ENCODE measurements at regions of chr2 and their contacts with region 1.

Region 1: GRCh38 chr2:133780099-133780839 is 212.0 kb upstream of the NCKAP5 start:
- DNase-seq: peak; percentile 94
- ATAC-seq: peak; percentile 20; the same call in 1 of the 2 replicates
- H3K4me3 ChIP-seq: no peak overlapping the region
- H3K27ac ChIP-seq: no peak overlapping the region
- H3K4me1 ChIP-seq: peaks cover 23% of the 10 kb centered on the region
- H3K27me3 ChIP-seq: no peaks in the 10 kb centered on the region
- CTCF ChIP-seq: peak; percentile 95

Region 2: GRCh38 chr2:133324147-133324561 is 456.1 kb before region 1 on chr2:
- CTCF ChIA-PET with region 1: no interaction called
- POLR2A ChIA-PET with region 1: no interaction called
- intact Hi-C with region 1: loop called (anchors 10 kb)
- DNase-seq: peak; percentile 86
- ATAC-seq: peak; percentile 94
- H3K4me3 ChIP-seq: no peak overlapping the region
- H3K27ac ChIP-seq: peak overlapping the region; percentile 95
- H3K4me1 ChIP-seq: peaks cover 48% of the 10 kb centered on the region
- H3K27me3 ChIP-seq: no peaks in the 10 kb centered on the region
- CTCF ChIP-seq: no peak

Region 3: GRCh38 chr2:133434962-133435668 is 345.2 kb before region 1 on chr2:
- CTCF ChIA-PET with region 1: no interaction called
- POLR2A ChIA-PET with region 1: no interaction called
- intact Hi-C with region 1: loop called (anchors 10 kb)
- DNase-seq: peak; percentile 65
- ATAC-seq: no peak
- H3K4me3 ChIP-seq: no peak overlapping the region
- H3K27ac ChIP-seq: no peak overlapping the region
- H3K4me1 ChIP-seq: peaks cover 16% of the 10 kb centered on the region
- H3K27me3 ChIP-seq: no peaks in the 10 kb centered on the region
- CTCF ChIP-seq: peak; percentile 24; the same call in 1 of the 2 replicates

Region 4: GRCh38 chr2:133568172-133568571 is 212.1 kb before region 1 on chr2 and contains the start of gene NCKAP5:
- CTCF ChIA-PET with region 1: interaction called, 14 read pairs
- POLR2A ChIA-PET with region 1: interaction called, 4 read pairs
- intact Hi-C with region 1: loop called (anchors 1 kb)
- DNase-seq: peak; percentile 59
- ATAC-seq: peak; percentile 59
- H3K4me3 ChIP-seq: peak within 1 kb of the TSS; percentile 69
- H3K27ac ChIP-seq: peak within 1 kb of the TSS; percentile 27
- H3K4me1 ChIP-seq: peaks cover 35% of the 10 kb centered on the region
- H3K27me3 ChIP-seq: no peaks in the 10 kb centered on the region
- CTCF ChIP-seq: no peak; the same call in 1 of the 2 replicates
- total RNA-seq, gene NCKAP5: 3.2 and 4.8 TPM in 2 replicates

Region 5: DNA sequence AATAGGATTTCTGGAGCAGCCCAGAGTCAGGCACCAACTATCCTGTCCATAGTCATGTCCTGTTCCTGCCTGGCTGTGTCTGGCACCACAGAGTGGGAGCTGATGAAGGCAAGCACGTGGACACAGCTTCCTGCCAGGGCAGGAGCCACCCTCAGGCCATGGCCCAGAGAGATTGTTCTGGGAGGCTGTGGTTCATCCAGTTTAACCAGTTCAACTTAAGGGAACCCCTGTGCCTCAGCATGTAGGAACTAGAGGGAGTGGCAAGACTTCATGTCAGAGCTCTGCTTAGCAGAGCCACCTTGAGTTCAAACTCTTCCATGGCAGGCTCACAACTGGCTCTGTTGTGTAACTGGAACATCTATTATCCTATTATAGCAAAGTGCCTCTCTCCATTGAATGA is 138.8 kb before region 1 on chr2:
- CTCF ChIA-PET with region 1: no interaction called
- POLR2A ChIA-PET with region 1: no interaction called
- intact Hi-C with region 1: loop called (anchors 5 kb)
- DNase-seq: peak; percentile 98
- ATAC-seq: peak; percentile 94
- H3K4me3 ChIP-seq: peak overlapping the region; percentile 46; the same call in 1 of the 2 replicates
- H3K27ac ChIP-seq: peak overlapping the region; percentile 72
- H3K4me1 ChIP-seq: peaks cover 33% of the 10 kb centered on the region
- H3K27me3 ChIP-seq: no peaks in the 10 kb centered on the region
- CTCF ChIP-seq: peak; percentile 80

Region 6: GRCh38 chr2:133817680-133818579 is 37.7 kb after region 1 on chr2:
- CTCF ChIA-PET with region 1: no interaction called
- POLR2A ChIA-PET with region 1: no interaction called
- intact Hi-C with region 1: loop called (anchors 2 kb)
- DNase-seq: peak; percentile 97
- ATAC-seq: peak; percentile 84
- H3K4me3 ChIP-seq: no peak overlapping the region
- H3K27ac ChIP-seq: peak overlapping the region; percentile 95
- H3K4me1 ChIP-seq: peaks cover 64% of the 10 kb centered on the region
- H3K27me3 ChIP-seq: no peaks in the 10 kb centered on the region
- CTCF ChIP-seq: no peak

Region 7: GRCh38 chr2:133886735-133887660 is 106.7 kb after region 1 on chr2:
- CTCF ChIA-PET with region 1: no interaction called
- POLR2A ChIA-PET with region 1: no interaction called
- intact Hi-C with region 1: no loop called
- DNase-seq: peak; percentile 91
- ATAC-seq: peak; percentile 83
- H3K4me3 ChIP-seq: peak overlapping the region; percentile 46; the same call in 1 of the 2 replicates
- H3K27ac ChIP-seq: no peak overlapping the region
- H3K4me1 ChIP-seq: peaks cover 17% of the 10 kb centered on the region
- H3K27me3 ChIP-seq: no peaks in the 10 kb centered on the region
- CTCF ChIP-seq: peak; percentile 85